PC-9 (cell line): ENCODE measurements at regions of chr16 and their contacts with region 1.

Region 1: DNA sequence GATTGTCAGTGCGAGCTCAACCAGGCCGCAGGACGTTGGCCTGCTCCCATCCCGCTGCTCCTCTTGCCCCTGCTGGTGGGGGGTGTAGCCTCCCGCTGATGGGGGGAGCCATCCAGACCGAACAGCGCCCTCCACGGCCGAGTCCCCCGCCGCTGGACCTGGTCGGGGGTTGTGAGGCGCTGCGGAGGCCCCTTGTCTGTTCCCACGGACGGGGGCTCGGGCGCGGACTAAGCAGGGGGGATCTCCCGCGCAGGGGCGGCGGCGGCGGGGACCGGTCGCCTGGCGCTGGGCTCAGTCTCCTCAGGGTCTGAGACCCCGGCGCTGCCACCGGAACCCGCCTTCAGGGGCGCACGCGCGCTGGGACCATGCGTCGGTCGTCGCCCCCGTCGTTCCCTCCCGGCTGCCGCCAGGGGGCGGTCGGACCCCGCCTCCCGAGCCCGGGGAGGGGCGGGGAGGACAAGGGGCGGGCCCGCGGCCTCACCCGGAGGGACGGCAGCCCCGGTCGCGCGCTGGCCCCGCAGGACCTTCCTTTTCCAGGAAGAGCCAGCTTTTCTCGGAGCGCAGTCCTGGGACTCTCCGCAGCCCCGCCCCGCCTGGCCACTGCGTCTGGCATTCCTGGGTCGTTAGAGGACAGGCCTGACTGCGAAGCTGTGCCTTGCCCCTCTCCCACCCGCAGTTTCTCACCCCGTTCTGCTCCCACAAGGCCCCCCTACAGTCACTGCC is 6.3 kb upstream of the IL32 start:
- DNase-seq: peak; percentile 71 to 98
- H3K4me3 ChIP-seq: peak overlapping the region; percentile 88
- H3K27ac ChIP-seq: no peak overlapping the region
- H3K4me1 ChIP-seq: peaks cover 10% of the 10 kb centered on the region; the same call in 1 of the 2 replicates
- H3K27me3 ChIP-seq: no peaks in the 10 kb centered on the region
- CTCF ChIP-seq: peak; percentile 85

Region 2: GRCh38 chr16:3003582-3004302 is 55.4 kb before region 1 on chr16:
- CTCF ChIA-PET with region 1: no interaction called
- POLR2A ChIA-PET with region 1: no interaction called
- intact Hi-C with region 1: loop called (anchors 2 kb)
- DNase-seq: peak; percentile 96 to 100
- H3K4me3 ChIP-seq: no peak overlapping the region; the same call in 1 of the 2 replicates
- H3K27ac ChIP-seq: no peak overlapping the region
- H3K4me1 ChIP-seq: peaks cover 33% of the 10 kb centered on the region
- H3K27me3 ChIP-seq: no peaks in the 10 kb centered on the region
- CTCF ChIP-seq: peak; percentile 61

Region 3: DNA sequence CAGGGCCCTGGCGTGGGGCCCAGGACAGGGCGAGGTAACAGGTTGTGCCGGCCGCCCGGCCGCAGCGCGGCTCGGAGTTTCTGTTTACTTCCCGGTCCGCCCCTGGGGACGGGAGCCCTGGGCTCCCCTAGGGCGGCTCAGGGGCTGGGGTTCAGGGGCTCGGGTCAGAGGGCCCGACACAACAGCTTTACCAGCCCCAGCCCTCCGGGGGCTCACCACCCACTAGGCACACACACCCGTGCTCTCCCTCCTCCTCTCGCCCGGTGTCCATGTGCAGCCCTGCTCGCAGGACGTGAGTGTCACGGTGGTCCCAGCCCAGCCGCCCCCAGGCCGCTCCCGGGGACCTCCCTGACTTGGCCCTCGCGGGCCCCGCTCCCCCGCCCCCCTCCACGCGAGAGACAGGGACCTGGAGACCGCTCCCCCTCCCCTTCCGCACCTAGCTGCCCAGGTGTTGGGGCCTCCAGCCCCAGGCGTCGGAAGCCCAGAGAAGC is 22.9 kb before region 1 on chr16:
- CTCF ChIA-PET with region 1: interaction called, 13 read pairs
- POLR2A ChIA-PET with region 1: interaction called, 4 read pairs
- intact Hi-C with region 1: loop called (anchors 1 kb)
- DNase-seq: peak in 1 of 2 experiments; percentile 63
- H3K4me3 ChIP-seq: peak overlapping the region; percentile 92
- H3K27ac ChIP-seq: no peak overlapping the region; the same call in 1 of the 2 replicates
- H3K4me1 ChIP-seq: peaks cover 50% of the 10 kb centered on the region
- H3K27me3 ChIP-seq: no peaks in the 10 kb centered on the region
- CTCF ChIP-seq: no peak

Region 4: DNA sequence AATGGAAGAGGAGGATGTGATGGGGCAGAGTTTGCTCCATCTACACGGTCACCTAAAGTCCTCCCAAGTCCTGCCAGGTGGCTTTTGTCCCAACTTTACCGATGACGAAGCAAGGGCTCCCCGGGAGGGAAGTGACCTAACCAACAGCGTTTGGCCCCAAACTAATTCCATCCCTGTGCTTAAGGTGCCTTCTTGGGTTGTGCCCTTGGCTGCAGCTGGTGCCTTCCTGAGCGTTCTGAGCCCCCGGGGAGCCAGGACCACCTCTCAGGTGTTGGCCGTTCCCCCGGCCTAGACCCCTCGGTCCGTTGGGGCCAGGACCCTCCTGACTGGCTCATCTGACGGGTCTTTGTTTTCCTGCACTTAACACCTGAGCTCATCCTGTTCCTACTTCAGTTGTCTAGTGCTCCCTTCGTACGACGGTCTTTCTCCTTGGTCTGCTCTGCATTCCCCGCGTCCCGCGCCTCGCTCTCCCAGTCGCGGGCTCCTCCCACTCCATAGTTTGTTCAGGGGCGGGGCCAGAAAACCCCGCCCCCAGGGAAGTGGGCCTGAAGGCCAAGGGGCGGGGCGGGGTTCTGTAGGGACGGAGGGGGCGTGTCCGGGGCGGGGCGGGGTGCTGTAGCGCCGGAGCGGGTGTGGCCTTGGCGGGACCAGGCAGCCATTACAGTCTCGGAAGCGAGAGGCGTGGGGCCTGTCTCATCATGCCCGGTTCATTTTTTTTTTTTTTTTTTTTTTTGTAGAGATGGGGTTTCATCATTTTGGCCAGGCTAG is 40.8 kb after region 1 on chr16:
- CTCF ChIA-PET with region 1: no interaction called
- POLR2A ChIA-PET with region 1: no interaction called
- intact Hi-C with region 1: no loop called
- DNase-seq: peak; percentile 70 to 96
- H3K4me3 ChIP-seq: peak overlapping the region; percentile 32; the same call in 1 of the 2 replicates
- H3K27ac ChIP-seq: no peak overlapping the region
- H3K4me1 ChIP-seq: peaks cover 5% of the 10 kb centered on the region; the same call in 1 of the 2 replicates
- H3K27me3 ChIP-seq: no peaks in the 10 kb centered on the region
- CTCF ChIP-seq: no peak

Region 5: GRCh38 chr16:3123986-3124886 is 65.1 kb after region 1 on chr16:
- CTCF ChIA-PET with region 1: interaction called, 11 read pairs
- POLR2A ChIA-PET with region 1: no interaction called
- intact Hi-C with region 1: loop called (anchors 1 kb)
- DNase-seq: peak; percentile 90 to 97
- H3K4me3 ChIP-seq: peak overlapping the region; percentile 62
- H3K27ac ChIP-seq: no peak overlapping the region
- H3K4me1 ChIP-seq: peaks cover 5% of the 10 kb centered on the region; the same call in 1 of the 2 replicates
- H3K27me3 ChIP-seq: no peaks in the 10 kb centered on the region
- CTCF ChIP-seq: no peak; the same call in 1 of the 2 replicates

Region 6: GRCh38 chr16:3165111-3165822 is 106.1 kb after region 1 on chr16:
- CTCF ChIA-PET with region 1: no interaction called
- POLR2A ChIA-PET with region 1: interaction called, 5 read pairs
- intact Hi-C with region 1: loop called (anchors 5 kb)
- DNase-seq: no peak
- H3K4me3 ChIP-seq: no peak overlapping the region
- H3K27ac ChIP-seq: no peak overlapping the region
- H3K4me1 ChIP-seq: 0 out of 2 replicates have a peak, but pooled peaks cover 4% of the 10 kb centered on the region
- H3K27me3 ChIP-seq: no peaks in the 10 kb centered on the region
- CTCF ChIP-seq: no peak